Activated B cell treated with CpG ODN at 0.5 μM for 24 hours (primary cell): ENCODE measurements at regions of chr7 and their contacts with region 1.

Region 1: GRCh38 chr7:157250605-157251228 is 86.1 kb upstream of the DNAJB6 start:
- DNase-seq: no peak
- ATAC-seq: peak; percentile 58
- H3K4me3 Mint-ChIP-seq: no peak overlapping the region
- H3K27ac Mint-ChIP-seq: no peak overlapping the region
- H3K4me1 Mint-ChIP-seq: peaks cover 2% of the 10 kb centered on the region
- H3K27me3 Mint-ChIP-seq: no peaks in the 10 kb centered on the region
- CTCF ChIP-seq: peak; percentile 71

Region 2: GRCh38 chr7:155796381-155797261 is 1454.1 kb before region 1 on chr7:
- CTCF ChIA-PET with region 1: no interaction called
- POLR2A ChIA-PET with region 1: no interaction called
- intact Hi-C with region 1: loop called (anchors 1 kb)
- DNase-seq: peak; percentile 71
- ATAC-seq: peak; percentile 85
- H3K4me3 Mint-ChIP-seq: no peak overlapping the region
- H3K27ac Mint-ChIP-seq: no peak overlapping the region
- H3K4me1 Mint-ChIP-seq: peaks cover 10% of the 10 kb centered on the region
- H3K27me3 Mint-ChIP-seq: peaks cover 34% of the 10 kb centered on the region
- CTCF ChIP-seq: peak; percentile 52

Region 3: DNA sequence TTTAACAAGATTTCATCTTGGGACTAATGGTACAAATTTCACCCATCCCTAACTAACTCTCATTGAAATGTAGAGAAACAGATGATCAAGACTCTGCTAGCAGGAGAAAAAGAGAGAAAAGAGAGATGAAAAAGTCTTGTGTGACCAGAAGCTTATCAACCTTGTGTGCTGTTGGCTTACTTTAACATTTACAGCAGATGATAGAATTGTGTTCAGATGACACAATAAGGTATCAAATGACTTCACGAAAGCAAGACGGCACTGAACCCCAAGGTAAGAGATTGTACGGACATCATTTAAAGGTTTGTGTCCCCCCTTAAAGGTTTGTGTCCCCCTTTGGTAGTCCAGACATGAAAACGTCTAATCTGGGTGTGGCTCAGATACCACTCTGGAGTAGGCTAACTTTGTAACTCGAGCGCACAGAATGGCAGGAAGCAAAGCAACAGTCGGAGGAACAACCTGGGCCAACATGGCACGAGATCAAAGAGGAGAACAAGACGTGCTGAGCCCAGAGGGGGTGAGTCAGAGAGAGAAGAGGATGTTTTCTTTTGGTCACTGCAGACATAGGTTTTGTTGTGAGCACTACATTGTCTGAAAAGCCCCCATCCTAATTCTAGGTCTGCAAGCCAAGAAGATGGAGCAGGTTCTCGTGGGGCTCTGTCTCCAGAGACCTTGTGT is 347.3 kb before region 1 on chr7:
- CTCF ChIA-PET with region 1: no interaction called
- POLR2A ChIA-PET with region 1: no interaction called
- intact Hi-C with region 1: loop called (anchors 2 kb)
- DNase-seq: no peak
- ATAC-seq: no peak
- H3K4me3 Mint-ChIP-seq: no peak overlapping the region
- H3K27ac Mint-ChIP-seq: no peak overlapping the region
- H3K4me1 Mint-ChIP-seq: no peaks in the 10 kb centered on the region
- H3K27me3 Mint-ChIP-seq: peaks cover 3% of the 10 kb centered on the region
- CTCF ChIP-seq: no peak

Region 4: DNA sequence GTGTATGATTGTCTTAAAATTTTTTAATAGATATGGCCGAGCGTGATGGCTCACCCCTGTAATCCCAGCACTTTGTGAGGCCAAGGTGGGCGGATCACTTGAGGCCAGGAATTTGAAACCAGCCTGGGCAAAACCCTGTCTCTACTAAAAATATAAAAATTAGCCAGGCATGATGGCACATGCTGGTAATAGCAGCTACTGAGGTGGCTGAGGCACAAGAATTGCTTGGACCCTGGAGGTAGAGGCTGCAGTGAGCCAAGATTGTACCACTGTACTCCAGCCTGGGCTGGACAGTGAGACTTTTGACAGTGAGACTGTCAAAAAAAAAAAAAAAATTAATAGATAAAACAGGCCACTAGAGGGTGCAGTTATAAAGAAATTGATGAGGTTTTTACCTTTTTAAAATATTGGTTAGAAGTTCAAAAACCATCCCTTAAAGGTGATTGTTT is 280.7 kb before region 1 on chr7:
- CTCF ChIA-PET with region 1: no interaction called
- POLR2A ChIA-PET with region 1: no interaction called
- intact Hi-C with region 1: loop called (anchors 1 kb)
- DNase-seq: no peak
- ATAC-seq: no peak
- H3K4me3 Mint-ChIP-seq: no peak overlapping the region
- H3K27ac Mint-ChIP-seq: no peak overlapping the region
- H3K4me1 Mint-ChIP-seq: no peaks in the 10 kb centered on the region
- H3K27me3 Mint-ChIP-seq: no peaks in the 10 kb centered on the region
- CTCF ChIP-seq: no peak

Region 5: DNA sequence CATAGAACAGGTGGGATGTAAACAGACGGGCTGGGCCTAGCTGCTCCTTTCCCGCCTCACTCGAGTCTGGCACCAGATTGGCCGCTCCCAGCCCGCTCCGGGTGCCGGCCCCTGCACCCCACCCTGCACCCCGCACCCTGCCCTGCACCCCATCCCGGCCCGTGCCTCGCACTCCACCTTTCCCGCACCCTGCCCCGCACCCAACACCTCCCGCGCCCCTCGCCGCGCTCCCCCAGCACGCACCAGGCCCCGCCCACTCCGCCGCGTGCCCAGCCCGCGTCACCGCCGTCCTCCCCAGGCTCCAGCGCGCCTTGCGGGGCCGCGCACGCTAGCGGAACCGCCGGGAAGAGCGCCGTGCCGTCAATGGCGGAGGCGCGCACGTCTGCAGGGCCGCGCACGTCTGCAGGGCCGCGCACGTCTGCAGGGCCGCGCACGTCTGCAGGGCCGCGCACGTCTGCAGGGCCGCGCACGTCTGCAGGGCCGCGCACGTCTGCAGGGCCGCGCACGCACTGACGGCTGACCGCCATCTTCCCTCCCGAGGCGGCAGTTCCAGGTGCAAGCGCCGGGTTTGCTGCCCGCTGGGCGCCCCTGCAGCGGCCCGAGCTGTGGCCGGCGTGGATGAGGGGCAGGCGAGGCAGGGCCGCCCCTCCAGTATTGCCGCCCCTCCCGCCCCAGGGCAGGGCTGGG is 112.2 kb before region 1 on chr7 and contains the start of gene UBE3C:
- CTCF ChIA-PET with region 1: no interaction called
- POLR2A ChIA-PET with region 1: no interaction called
- intact Hi-C with region 1: no loop called
- DNase-seq: peak; percentile 91
- ATAC-seq: peak; percentile 89
- H3K4me3 Mint-ChIP-seq: peak within 1 kb of the TSS; percentile 81
- H3K27ac Mint-ChIP-seq: peak within 1 kb of the TSS; percentile 88
- H3K4me1 Mint-ChIP-seq: peaks cover 37% of the 10 kb centered on the region
- H3K27me3 Mint-ChIP-seq: no peaks in the 10 kb centered on the region
- CTCF ChIP-seq: no peak
- total RNA-seq, gene UBE3C: 52.8 and 65.3 TPM in 2 replicates